ENCODE measurements at regions of chr17 and their contacts with region 1.

Region 1: GRCh38 chr17:1573916-1574696 is 11.5 kb upstream of the PITPNA start:
- DNase-seq: peak; percentile 87
- H3K4me3 Mint-ChIP-seq: no peak overlapping the region
- H3K27ac Mint-ChIP-seq: no peak overlapping the region
- H3K4me1 Mint-ChIP-seq: peaks cover 10% of the 10 kb centered on the region
- H3K27me3 Mint-ChIP-seq: no peaks in the 10 kb centered on the region
- CTCF ChIP-seq: peak; percentile 97

Region 2: GRCh38 chr17:1590031-1590748 is 16.1 kb after region 1 on chr17:
- CTCF ChIA-PET with region 1: interaction called, 6 read pairs
- POLR2A ChIA-PET with region 1: interaction called, 21 read pairs
- intact Hi-C with region 1: no loop called
- DNase-seq: peak; percentile 94
- H3K4me3 Mint-ChIP-seq: peak overlapping the region; percentile 52
- H3K27ac Mint-ChIP-seq: peak overlapping the region; percentile 64
- H3K4me1 Mint-ChIP-seq: peaks cover 11% of the 10 kb centered on the region
- H3K27me3 Mint-ChIP-seq: no peaks in the 10 kb centered on the region
- CTCF ChIP-seq: no peak

Region 3: GRCh38 chr17:1628856-1629646 is 54.9 kb after region 1 on chr17:
- CTCF ChIA-PET with region 1: interaction called, 79 read pairs
- POLR2A ChIA-PET with region 1: interaction called, 58 read pairs
- intact Hi-C with region 1: loop called (anchors 1 kb)
- DNase-seq: peak; percentile 89
- H3K4me3 Mint-ChIP-seq: peak overlapping the region; percentile 95
- H3K27ac Mint-ChIP-seq: peak overlapping the region; percentile 77
- H3K4me1 Mint-ChIP-seq: peaks cover 24% of the 10 kb centered on the region
- H3K27me3 Mint-ChIP-seq: no peaks in the 10 kb centered on the region
- CTCF ChIP-seq: peak; percentile 30

Region 4: GRCh38 chr17:1648963-1649843 is 75.1 kb after region 1 on chr17:
- CTCF ChIA-PET with region 1: interaction called, 37 read pairs
- POLR2A ChIA-PET with region 1: interaction called, 30 read pairs
- intact Hi-C with region 1: loop called (anchors 2 kb)
- DNase-seq: peak; percentile 89
- H3K4me3 Mint-ChIP-seq: peak overlapping the region; percentile 70
- H3K27ac Mint-ChIP-seq: peak overlapping the region; percentile 23
- H3K4me1 Mint-ChIP-seq: peaks cover 4% of the 10 kb centered on the region
- H3K27me3 Mint-ChIP-seq: no peaks in the 10 kb centered on the region
- CTCF ChIP-seq: peak; percentile 82

Region 5: DNA sequence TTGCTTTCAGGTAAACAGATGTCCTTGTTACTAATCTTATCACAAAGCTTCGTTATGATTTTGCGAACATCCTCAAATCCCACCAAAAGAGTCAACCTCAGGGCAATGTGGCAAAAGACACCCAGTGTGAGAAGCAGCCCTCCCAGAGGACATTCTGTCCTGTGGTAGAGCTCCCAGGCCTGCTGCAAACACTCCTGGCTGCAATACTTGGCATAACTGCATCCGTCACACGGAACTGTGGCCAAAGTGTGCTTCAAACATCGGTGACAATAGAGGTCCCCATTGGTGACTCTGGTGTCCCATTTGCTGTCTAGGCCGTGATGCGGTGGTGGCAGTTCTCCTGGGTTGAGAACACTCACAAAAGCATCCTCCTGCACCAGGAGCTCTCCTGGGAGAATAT is 226.1 kb after region 1 on chr17:
- CTCF ChIA-PET with region 1: no interaction called
- POLR2A ChIA-PET with region 1: no interaction called
- intact Hi-C with region 1: no loop called
- DNase-seq: no peak
- H3K4me3 Mint-ChIP-seq: no peak overlapping the region
- H3K27ac Mint-ChIP-seq: no peak overlapping the region
- H3K4me1 Mint-ChIP-seq: no peaks in the 10 kb centered on the region
- H3K27me3 Mint-ChIP-seq: no peaks in the 10 kb centered on the region
- CTCF ChIP-seq: no peak

Region 6: DNA sequence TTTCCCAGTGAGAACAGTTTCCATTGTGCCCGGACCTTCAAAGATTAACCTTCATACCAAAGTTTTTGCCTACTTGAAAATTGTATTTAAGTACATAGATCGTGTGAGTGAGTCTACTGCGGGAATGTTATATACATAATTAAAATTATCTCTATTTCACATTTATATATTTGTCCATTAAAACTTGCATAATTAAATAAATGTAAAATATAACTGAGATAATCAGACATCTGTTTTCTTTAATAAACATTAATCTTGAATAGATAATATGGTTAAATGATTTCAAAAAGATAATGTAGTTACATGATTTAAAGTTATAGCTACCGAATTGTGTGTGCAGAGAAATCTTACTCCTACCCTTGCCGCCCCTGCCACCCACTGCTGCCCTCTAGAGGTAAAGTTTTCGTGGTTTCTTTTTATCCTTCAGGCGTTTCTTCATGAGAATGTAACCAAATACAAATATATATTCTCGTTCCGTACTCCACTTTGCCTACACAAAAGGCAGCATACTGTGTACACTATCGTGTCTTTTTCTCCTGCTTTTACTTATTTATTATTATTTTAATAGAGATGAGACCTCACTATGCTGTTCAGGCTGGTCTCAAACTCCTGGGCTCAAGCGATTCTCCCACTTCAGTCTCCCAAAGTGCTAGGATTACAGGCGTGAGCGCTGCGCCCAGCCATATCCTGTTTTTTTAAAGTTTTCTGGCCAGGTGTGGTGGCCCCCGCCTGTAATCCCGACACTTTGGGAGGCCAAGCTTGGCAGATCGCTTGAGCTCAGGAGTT is 291.3 kb after region 1 on chr17:
- CTCF ChIA-PET with region 1: interaction called, 3 read pairs
- POLR2A ChIA-PET with region 1: no interaction called
- intact Hi-C with region 1: loop called (anchors 5 kb)
- DNase-seq: peak; percentile 61
- H3K4me3 Mint-ChIP-seq: no peak overlapping the region
- H3K27ac Mint-ChIP-seq: no peak overlapping the region
- H3K4me1 Mint-ChIP-seq: no peaks in the 10 kb centered on the region
- H3K27me3 Mint-ChIP-seq: no peaks in the 10 kb centered on the region
- CTCF ChIP-seq: peak; percentile 68